AG04449 (cell line): ENCODE measurements at regions of chr17 and their contacts with region 1.

Region 1: DNA sequence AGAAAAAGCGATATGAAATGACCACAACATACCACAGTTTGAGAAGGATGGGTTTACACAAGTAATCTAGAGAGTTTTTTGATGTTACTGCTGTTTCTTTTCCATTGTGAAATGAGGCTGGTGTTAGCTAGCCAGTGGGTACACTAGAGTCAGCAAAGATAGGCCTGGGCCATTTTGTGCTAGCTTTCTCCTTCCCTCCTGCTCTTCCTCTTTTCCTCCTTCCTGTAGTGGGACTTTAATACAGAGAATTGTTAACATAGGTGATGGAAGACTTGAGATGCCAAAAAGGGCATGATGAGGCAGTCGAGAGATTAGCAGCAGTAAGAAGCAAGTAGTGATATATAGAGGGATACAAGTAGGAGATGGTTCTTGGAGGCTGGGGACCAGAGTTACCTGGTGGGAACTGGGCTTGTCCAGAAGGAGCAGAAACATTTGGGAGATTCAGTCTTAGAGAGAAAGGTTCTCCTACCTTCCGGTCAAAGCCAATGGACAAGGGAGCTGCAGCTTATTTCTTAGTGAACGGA is 7.7 kb downstream of the NSRP1 start:
- DNase-seq: no peak
- H3K4me3 ChIP-seq: no peak overlapping the region
- CTCF ChIP-seq: no peak

Region 2: DNA sequence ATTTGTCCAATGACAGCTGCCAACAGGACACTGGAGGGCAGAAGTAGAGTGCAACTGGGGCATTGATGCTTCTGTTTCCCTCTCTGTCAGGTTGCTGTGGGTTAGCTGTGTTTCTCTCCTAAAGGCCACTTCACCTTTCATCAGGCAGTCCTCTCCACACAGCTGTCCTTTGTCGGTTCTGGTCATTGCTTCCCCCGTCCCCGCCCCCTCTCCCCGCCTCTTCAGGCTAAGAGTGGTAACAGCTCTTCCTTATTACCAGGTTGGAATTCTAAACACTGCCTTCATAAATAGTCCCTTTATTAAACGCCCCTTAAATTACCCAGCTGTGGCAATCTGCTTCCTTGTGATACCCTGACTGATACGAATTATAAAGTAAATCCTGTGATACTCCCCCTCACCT is 39.5 kb before region 1 on chr17:
- CTCF ChIA-PET with region 1: no interaction called
- POLR2A ChIA-PET with region 1: no interaction called
- DNase-seq: no peak
- H3K4me3 ChIP-seq: no peak overlapping the region
- CTCF ChIP-seq: no peak

Region 3: DNA sequence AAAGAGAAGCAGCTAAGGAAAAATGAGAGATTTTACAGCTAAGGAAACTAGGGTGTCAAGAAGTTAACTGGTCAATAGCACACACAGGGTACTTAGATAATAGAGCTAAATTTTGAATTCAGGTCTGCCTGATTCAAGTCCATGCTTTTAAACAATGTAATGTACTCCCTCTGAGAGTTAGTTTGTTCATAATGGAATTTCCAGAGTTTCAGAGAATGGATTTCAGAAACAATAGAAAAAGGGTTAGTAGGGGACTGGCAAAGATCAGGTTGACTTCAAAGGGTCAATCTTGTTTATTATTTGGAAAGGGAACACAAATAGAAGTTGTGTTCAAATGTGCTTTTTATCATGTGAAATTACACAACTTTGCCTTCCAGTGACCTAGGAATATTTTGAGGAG is 10.2 kb after region 1 on chr17:
- CTCF ChIA-PET with region 1: interaction called, 53 read pairs
- POLR2A ChIA-PET with region 1: no interaction called
- DNase-seq: no peak
- H3K4me3 ChIP-seq: no peak overlapping the region
- CTCF ChIP-seq: no peak

Region 4: DNA sequence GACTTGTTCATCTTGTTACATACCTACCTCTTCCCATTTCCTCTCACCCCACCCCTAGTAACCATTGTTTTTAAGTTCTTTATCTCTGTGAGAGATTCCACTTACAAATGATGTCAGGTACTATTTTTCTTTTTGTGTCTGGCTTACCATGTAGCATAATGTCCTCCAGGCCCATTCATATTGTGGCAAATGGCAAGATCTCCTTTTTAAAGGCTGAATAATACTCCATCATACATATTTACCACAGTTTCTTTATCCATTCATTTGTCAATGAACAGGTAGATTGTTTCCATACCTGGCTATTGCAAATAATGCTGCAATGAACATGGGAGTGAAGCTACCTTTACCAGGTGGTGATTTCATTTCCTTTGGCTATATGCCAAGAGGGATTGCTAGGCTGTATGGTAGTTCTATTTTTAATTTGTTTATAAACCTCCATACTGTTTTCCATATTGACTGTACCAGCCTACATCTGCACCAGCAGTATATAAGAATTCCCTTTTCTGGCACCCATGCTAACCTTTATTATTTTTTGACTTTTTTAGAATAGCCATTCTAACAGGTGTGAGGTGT is 46.2 kb after region 1 on chr17:
- CTCF ChIA-PET with region 1: interaction called, 12 read pairs
- POLR2A ChIA-PET with region 1: interaction called, 4 read pairs
- DNase-seq: no peak
- H3K4me3 ChIP-seq: no peak overlapping the region
- CTCF ChIP-seq: no peak

Region 5: GRCh38 chr17:30271102-30271501 is 146.8 kb after region 1 on chr17:
- CTCF ChIA-PET with region 1: interaction called, 17 read pairs
- POLR2A ChIA-PET with region 1: no interaction called
- DNase-seq: no peak
- H3K4me3 ChIP-seq: no peak overlapping the region
- CTCF ChIP-seq: no peak

Region 6: DNA sequence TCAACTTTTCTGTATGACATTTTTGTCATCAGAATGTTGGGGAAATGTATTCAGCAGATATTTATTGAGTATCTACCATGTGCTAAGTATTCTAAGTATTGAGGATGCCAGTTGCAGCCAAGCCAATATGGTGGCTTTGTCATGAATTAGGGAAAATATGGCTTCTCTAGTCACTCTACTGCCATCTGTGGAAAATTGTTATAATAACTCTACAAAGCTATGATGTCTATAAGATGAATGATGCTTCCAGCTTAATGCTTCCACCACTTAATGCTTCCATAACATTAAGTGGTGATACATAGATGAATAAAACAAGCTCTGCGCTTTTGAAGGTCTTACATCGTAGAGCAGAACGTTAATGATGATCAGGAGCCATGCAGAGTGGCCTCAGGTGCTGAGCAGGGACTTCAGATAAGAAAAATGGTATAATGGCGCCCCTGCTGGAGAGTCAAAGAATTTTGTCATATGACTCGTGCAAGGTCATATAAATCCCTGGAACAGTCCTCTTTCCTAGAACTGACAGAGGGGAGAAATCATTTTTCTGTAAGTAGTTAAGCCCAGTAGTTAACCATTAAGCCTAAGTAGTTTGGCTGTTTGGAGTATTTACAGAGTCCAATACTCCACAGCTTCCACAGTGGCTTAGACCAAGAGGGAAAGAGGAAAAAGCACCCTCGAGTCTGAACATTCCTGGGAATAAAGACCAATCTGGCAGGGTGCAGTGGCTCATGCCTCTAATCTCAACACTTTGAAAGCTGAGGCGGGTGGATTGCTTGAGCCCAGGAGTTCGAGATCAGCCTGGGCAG is 212.2 kb after region 1 on chr17:
- CTCF ChIA-PET with region 1: interaction called, 15 read pairs
- POLR2A ChIA-PET with region 1: no interaction called
- DNase-seq: no peak
- H3K4me3 ChIP-seq: no peak overlapping the region
- CTCF ChIP-seq: peak; percentile 7